Naive thymus-derived CD4-positive, alpha-beta T cell (primary cell): ENCODE measurements at regions of chr6 and their contacts with region 1.

Region 1: GRCh38 chr6:109455502-109456282 is at the start of gene MICAL1:
- DNase-seq: peak; percentile 55 to 79 (median 72)
- ATAC-seq: peak; percentile 82
- H3K4me3 ChIP-seq: peak within 1 kb of the TSS; percentile 81
- H3K4me3 Mint-ChIP-seq: peak within 1 kb of the TSS; percentile 95 to 99 (median 97)
- H3K27ac ChIP-seq: peak within 1 kb of the TSS; percentile 94
- H3K27ac Mint-ChIP-seq: peak within 1 kb of the TSS; percentile 83 to 99 (median 97)
- H3K4me1 ChIP-seq: peaks cover 40 to 45% of the 10 kb centered on the region in 2 donors
- H3K4me1 Mint-ChIP-seq: peaks cover 29 to 68% (median 62%) of the 10 kb centered on the region in 7 donors
- H3K27me3 ChIP-seq: no peaks in the 10 kb centered on the region
- H3K27me3 Mint-ChIP-seq: no peaks in the 10 kb centered on the region
- total RNA-seq, gene MICAL1: 61.4 to 125 (median 78.7) TPM

Region 2: GRCh38 chr6:109477725-109478124 is 22.0 kb after region 1 on chr6:
- CTCF ChIA-PET with region 1: interaction called, 3 read pairs
- POLR2A ChIA-PET with region 1: interaction called, 58 read pairs
- intact Hi-C with region 1: loop called (anchors 1 kb)
- DNase-seq: no peak
- ATAC-seq: no peak
- H3K4me3 ChIP-seq: peak overlapping the region; percentile 10
- H3K4me3 Mint-ChIP-seq: peak overlapping the region; percentile 71 to 99 (median 91)
- H3K27ac ChIP-seq: peak overlapping the region; percentile 57
- H3K27ac Mint-ChIP-seq: peak overlapping the region in 7 of 9 donors; percentile 38 to 94 (median 79)
- H3K4me1 ChIP-seq: peaks cover 45 to 67% of the 10 kb centered on the region in 2 donors
- H3K4me1 Mint-ChIP-seq: peaks cover 57 to 92% (median 83%) of the 10 kb centered on the region in 7 donors
- H3K27me3 ChIP-seq: no peaks in the 10 kb centered on the region
- H3K27me3 Mint-ChIP-seq: no peaks in the 10 kb centered on the region

Region 3: GRCh38 chr6:109503327-109504224 is 47.9 kb after region 1 on chr6:
- CTCF ChIA-PET with region 1: no interaction called
- POLR2A ChIA-PET with region 1: no interaction called
- intact Hi-C with region 1: no loop called
- DNase-seq: no peak
- ATAC-seq: no peak
- H3K4me3 ChIP-seq: no peak overlapping the region
- H3K4me3 Mint-ChIP-seq: no peak overlapping the region
- H3K27ac ChIP-seq: no peak overlapping the region
- H3K27ac Mint-ChIP-seq: no peak overlapping the region
- H3K4me1 ChIP-seq: no peaks in the 10 kb centered on the region
- H3K4me1 Mint-ChIP-seq: peaks cover 0 to 8% (median 5%) of the 10 kb centered on the region in 7 donors
- H3K27me3 ChIP-seq: no peaks in the 10 kb centered on the region
- H3K27me3 Mint-ChIP-seq: peaks cover 0 to 24% (median 0%) of the 10 kb centered on the region in 5 donors

Region 4: DNA sequence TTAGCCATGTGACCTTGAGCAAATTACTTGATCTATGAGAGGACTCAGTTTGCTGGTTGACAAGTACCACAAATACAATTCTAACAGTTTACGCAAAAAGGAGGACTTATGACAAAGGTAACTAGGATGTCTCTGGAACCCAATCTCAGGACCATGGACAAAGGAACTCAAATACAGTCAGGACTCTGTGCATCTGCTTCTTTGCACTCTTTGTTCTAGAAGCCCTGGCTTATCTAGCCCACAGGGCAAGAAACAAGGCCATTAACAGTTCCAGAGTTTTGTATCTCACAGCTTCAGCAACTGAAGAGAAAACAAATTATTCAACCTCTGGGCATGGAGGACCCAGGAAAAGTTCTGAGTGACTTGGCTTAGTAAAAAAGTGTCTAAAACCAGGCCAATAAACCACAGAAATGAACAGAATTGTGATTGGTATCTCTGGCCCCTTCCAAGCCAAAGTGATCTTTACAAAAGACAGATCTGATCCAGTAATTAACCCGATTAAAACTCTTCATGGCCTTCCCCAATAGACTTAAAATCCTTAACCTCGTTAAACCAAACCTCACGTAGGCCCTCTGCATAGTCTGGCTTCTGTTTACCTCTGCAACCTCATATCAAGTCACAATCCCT is 717.9 kb after region 1 on chr6:
- CTCF ChIA-PET with region 1: no interaction called
- POLR2A ChIA-PET with region 1: no interaction called
- intact Hi-C with region 1: no loop called
- DNase-seq: no peak
- ATAC-seq: no peak
- H3K4me3 ChIP-seq: no peak overlapping the region
- H3K4me3 Mint-ChIP-seq: no peak overlapping the region
- H3K27ac ChIP-seq: no peak overlapping the region
- H3K27ac Mint-ChIP-seq: no peak overlapping the region
- H3K4me1 ChIP-seq: no peaks in the 10 kb centered on the region
- H3K4me1 Mint-ChIP-seq: peaks cover 4 to 6% (median 5%) of the 10 kb centered on the region in 7 donors
- H3K27me3 ChIP-seq: peaks cover 0 to 7% of the 10 kb centered on the region in 2 donors
- H3K27me3 Mint-ChIP-seq: peaks cover 16 to 41% (median 33%) of the 10 kb centered on the region in 5 donors